AG04449 (cell line): ENCODE measurements at regions of chr12 and their contacts with region 1.

Region 1: GRCh38 chr12:24991209-24992049 is 42.5 kb upstream of the BCAT1 start:
- DNase-seq: no peak
- H3K4me3 ChIP-seq: no peak overlapping the region
- CTCF ChIP-seq: peak; percentile 19

Region 2: DNA sequence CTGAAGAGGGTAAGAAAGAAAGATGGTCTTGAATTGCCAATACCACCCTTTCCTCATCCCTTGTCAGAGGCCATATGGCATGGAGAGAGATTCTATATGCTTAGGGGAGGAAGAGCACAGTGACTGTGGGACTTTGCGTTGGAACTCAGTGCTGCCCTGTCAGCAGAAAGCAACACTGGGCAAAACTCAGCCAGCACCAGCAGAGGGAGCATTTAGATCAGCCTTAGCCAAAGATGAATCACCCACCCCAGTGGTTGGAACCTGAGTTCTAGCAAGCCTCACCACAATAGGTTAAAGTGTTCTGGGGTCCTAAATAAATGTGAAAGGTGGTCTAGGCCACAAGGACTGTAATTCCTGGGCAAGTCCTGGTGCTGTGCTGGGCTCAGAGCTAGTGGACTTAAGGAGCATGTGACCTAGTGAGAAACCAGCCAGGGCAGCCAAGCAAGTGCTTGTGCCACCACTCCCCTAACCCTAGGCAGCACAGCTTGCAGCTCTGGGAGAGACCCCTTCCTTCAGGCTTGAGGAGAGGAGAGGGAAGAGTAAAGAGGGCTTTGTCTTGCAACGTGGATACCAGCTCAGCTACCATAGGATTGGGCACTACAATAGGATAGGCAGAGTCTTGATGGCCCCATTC is 31.1 kb before region 1 on chr12:
- CTCF ChIA-PET with region 1: interaction called, 23 read pairs
- POLR2A ChIA-PET with region 1: no interaction called
- DNase-seq: no peak
- H3K4me3 ChIP-seq: no peak overlapping the region
- CTCF ChIP-seq: peak; percentile 87

Region 3: DNA sequence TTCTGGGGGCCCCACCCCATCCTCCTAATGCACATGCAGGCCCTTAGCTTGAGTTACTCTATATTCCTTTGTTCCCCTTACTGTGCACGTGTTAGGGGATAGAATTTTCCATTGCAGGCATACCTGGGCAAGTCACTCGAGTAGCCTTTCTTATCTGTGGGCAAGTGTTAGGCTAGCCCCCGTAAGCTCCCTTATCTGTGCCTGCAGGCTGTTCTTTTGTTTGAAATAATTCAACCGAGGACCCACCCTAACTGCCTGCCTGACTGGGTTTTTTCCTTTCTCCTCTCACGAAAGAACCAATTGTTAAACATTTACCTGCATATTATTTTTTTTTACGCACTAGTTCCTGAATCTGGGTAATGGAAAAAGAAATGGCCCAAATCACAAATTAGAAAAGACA is 21.3 kb before region 1 on chr12:
- CTCF ChIA-PET with region 1: interaction called, 11 read pairs
- POLR2A ChIA-PET with region 1: no interaction called
- DNase-seq: no peak
- H3K4me3 ChIP-seq: no peak overlapping the region
- CTCF ChIP-seq: no peak

Region 4: GRCh38 chr12:24979329-24979728 is 12.1 kb before region 1 on chr12:
- CTCF ChIA-PET with region 1: interaction called, 37 read pairs
- POLR2A ChIA-PET with region 1: no interaction called
- DNase-seq: no peak
- H3K4me3 ChIP-seq: no peak overlapping the region
- CTCF ChIP-seq: no peak

Region 5: DNA sequence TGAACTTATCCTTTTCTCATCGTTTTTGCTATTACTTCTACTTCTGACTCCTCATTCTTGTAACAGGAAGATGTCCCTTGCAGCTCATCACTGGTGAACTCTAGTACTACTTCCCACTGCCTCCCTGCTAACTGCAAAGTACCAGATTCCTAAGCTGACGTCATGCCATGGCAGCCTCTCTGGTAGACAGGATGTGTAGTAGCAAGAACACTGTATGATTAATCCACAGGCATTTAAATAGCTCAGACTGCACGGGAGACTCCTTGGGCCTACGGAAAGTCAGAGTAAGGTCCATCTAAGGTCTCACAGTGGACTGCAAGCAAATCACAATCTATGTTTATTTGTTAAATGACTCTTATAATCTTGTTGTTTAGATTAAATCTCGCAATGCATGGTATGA is 160.0 kb after region 1 on chr12:
- CTCF ChIA-PET with region 1: interaction called, 47 read pairs
- POLR2A ChIA-PET with region 1: no interaction called
- DNase-seq: peak; percentile 98
- H3K4me3 ChIP-seq: no peak overlapping the region
- CTCF ChIP-seq: no peak